AG04449 (cell line): ENCODE measurements at regions of chr4 and their contacts with region 1.

Region 1: DNA sequence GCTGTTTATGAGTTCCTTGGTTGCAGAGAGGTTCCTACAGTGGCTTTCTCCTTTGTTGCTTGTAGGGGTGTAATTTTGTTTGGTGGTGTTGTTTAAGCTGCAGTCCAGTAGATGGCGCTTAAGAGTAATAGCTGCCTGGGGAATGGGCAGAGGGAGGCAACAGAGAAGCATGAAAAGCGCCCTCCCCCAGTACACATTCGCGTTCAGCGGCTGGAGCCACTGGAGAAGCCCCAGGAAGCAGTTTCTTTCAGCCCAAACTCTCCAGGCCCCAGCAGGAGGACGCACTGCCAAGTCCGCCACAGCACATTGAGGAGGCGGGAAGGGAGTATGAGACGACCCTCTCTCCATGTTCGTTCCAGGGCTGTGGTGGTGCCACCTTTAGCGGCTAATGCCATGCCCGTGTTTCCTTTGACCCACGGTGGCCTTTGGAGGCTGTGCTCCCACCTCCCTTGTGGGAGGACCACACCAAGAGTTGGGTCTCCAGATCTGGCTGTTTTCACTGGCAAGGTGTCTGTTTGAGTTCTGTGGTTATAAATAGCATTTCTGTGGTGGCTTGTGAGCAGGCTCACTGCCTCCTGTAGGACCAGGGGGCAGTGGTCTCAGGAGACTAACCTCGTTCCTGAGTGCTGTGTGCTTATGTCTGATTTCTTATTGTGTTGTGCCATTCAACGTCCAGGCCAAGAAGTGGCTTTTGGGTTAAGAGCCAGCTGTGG is 252.3 kb downstream of the ARHGAP10 start:
- DNase-seq: no peak
- H3K4me3 ChIP-seq: no peak overlapping the region
- CTCF ChIP-seq: peak; percentile 59

Region 2: GRCh38 chr4:147723326-147723725 is 260.9 kb before region 1 on chr4:
- CTCF ChIA-PET with region 1: no interaction called
- POLR2A ChIA-PET with region 1: no interaction called
- DNase-seq: no peak
- H3K4me3 ChIP-seq: no peak overlapping the region
- CTCF ChIP-seq: no peak

Region 3: GRCh38 chr4:147786031-147786430 is 198.2 kb before region 1 on chr4:
- CTCF ChIA-PET with region 1: no interaction called
- POLR2A ChIA-PET with region 1: no interaction called
- DNase-seq: no peak
- H3K4me3 ChIP-seq: no peak overlapping the region
- CTCF ChIP-seq: no peak

Region 4: DNA sequence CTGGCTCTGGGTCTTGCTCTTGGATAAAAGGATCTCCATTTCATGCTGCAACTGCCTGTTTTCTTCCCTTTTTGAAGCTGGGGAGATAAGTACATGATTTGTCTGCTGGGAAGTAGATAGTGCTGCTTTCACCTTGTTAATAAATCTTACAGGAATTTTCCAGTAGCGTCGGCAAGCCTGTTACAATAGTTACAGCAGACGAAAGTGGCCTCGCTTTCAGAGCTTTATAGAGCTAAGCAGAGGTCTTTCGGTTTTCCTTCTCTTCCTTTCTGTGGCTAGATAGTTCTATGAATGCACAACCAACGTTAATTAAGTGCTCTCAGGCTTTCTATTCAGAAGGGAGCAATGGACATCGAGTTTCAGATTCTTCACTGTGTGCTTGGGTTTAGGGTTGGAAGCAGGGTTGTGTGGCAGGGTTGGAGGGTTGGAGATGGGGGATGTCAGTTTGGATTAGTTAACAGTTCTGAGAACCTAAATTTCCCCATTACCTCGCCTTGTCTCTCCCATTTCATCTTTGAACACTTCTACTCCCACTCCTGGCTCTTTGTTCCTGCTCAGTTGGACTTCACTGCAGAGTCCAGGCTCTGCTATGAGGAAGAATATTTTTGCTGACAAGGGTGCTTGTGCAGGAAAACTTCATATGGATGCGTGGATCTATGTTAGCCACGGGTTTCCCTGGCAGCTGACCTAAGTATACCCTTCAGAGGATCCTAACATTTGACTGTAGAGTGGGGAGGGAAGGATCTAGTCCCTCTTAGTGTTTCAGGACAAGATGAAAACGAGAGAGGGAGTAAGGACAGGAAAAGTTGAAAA is 14.4 kb before region 1 on chr4:
- CTCF ChIA-PET with region 1: interaction called, 12 read pairs
- POLR2A ChIA-PET with region 1: no interaction called
- DNase-seq: no peak
- H3K4me3 ChIP-seq: no peak overlapping the region
- CTCF ChIP-seq: no peak

Region 5: DNA sequence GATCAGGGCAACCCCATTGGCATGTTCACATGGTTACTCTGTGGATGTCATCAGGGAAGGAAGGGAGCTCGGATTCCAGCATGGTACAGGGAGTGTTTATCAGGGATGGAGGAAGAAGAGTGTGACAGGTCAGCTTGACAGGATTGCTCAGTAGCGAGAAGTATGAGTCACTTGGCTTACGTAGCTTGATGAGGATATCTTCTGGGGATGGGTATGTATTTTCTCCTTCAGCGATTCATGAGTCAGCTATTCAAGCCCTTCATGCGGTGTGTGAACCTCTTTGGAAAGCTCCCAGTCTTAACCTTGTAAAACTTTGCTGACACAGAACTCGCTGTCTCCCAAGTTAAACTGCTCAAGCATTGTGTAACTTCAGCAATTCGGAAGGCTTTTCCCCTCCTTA is 23.1 kb after region 1 on chr4:
- CTCF ChIA-PET with region 1: interaction called, 10 read pairs
- POLR2A ChIA-PET with region 1: no interaction called
- DNase-seq: peak; percentile 90
- H3K4me3 ChIP-seq: no peak overlapping the region
- CTCF ChIP-seq: no peak